Posterior cingulate gyrus (tissue), 11 donors: ENCODE measurements at regions of chr12 and their contacts with region 1.

Region 1: DNA sequence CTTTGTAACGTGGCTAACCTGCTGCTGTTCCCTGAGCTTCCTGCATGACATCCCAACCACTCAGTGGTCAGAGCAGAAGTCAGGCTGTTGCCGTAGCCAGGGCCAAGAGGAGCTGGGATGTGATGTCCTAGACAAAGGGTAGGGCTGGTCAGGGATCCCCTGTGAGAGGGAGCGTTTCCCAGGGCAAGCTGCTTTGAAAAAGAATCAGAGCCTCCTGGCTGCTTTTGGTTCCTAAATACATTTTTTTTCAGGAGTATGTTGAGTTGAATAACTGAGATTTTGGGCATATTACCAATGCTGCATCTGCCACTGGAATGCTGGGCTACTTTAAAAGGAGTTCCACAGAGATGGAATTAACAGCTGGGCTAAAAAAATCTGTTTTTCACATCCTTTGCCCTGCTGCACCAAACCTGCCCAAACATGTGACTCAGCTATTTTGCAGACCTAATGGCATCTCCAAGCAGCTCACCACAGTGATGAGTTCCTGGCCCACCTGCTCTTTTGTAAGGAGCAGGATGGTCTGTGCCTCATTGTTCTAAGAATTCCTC is 23.9 kb downstream of the ANKRD13A start:
- DNase-seq: no peak

Region 2: GRCh38 chr12:109899783-109900751 is 123.1 kb before region 1 on chr12 and contains the start of gene TCHP:
- intact Hi-C with region 1: loop called (anchors 10 kb)
- DNase-seq: peak; percentile 82 to 98 (median 88)